B cell (primary cell): ENCODE measurements at regions of chr5 and their contacts with region 1.

Region 1: GRCh38 chr5:59799668-59800346 is 93.7 kb downstream of the PDE4D start:
- DNase-seq: peak; percentile 76
- ATAC-seq: peak; percentile 50
- H3K4me3 ChIP-seq: peak overlapping the region in 3 of 5 experiments; percentile 6 to 54 (median 28)
- H3K4me3 Mint-ChIP-seq: no peak overlapping the region
- H3K27ac ChIP-seq: peak overlapping the region; percentile 55 to 74
- H3K27ac Mint-ChIP-seq: no peak overlapping the region
- H3K4me1 ChIP-seq: peaks cover 26 to 30% of the 10 kb centered on the region in 2 donors
- H3K4me1 Mint-ChIP-seq: peaks cover 14% of the 10 kb centered on the region
- H3K27me3 ChIP-seq: no peaks in the 10 kb centered on the region
- H3K27me3 Mint-ChIP-seq: no peaks in the 10 kb centered on the region
- CTCF ChIP-seq: peak; percentile 94

Region 2: GRCh38 chr5:58886315-58887207 is 913.2 kb before region 1 on chr5:
- CTCF ChIA-PET with region 1: interaction called, 10 read pairs
- POLR2A ChIA-PET with region 1: no interaction called
- intact Hi-C with region 1: loop called (anchors 1 kb)
- DNase-seq: peak; percentile 70
- ATAC-seq: peak; percentile 89
- H3K4me3 ChIP-seq: no peak overlapping the region
- H3K4me3 Mint-ChIP-seq: no peak overlapping the region
- H3K27ac ChIP-seq: no peak overlapping the region
- H3K27ac Mint-ChIP-seq: no peak overlapping the region
- H3K4me1 ChIP-seq: peaks cover 0 to 3% of the 10 kb centered on the region in 2 donors
- H3K4me1 Mint-ChIP-seq: peaks cover 5% of the 10 kb centered on the region
- H3K27me3 ChIP-seq: peaks cover 0 to 7% (median 5%) of the 10 kb centered on the region in 4 experiments
- H3K27me3 Mint-ChIP-seq: peaks cover 14% of the 10 kb centered on the region
- CTCF ChIP-seq: peak; percentile 89

Region 3: GRCh38 chr5:59188419-59189225 is 611.2 kb before region 1 on chr5:
- CTCF ChIA-PET with region 1: interaction called, 20 read pairs
- POLR2A ChIA-PET with region 1: no interaction called
- intact Hi-C with region 1: loop called (anchors 1 kb)
- DNase-seq: peak; percentile 73
- ATAC-seq: peak; percentile 62
- H3K4me3 ChIP-seq: no peak overlapping the region
- H3K4me3 Mint-ChIP-seq: peak overlapping the region; percentile 5
- H3K27ac ChIP-seq: no peak overlapping the region
- H3K27ac Mint-ChIP-seq: no peak overlapping the region
- H3K4me1 ChIP-seq: peaks cover 4 to 6% of the 10 kb centered on the region in 2 donors
- H3K4me1 Mint-ChIP-seq: peaks cover 3% of the 10 kb centered on the region
- H3K27me3 ChIP-seq: no peaks in the 10 kb centered on the region
- H3K27me3 Mint-ChIP-seq: peaks cover 10% of the 10 kb centered on the region
- CTCF ChIP-seq: peak; percentile 93

Region 4: GRCh38 chr5:59506285-59506877 is 293.4 kb before region 1 on chr5:
- CTCF ChIA-PET with region 1: interaction called, 68 read pairs
- POLR2A ChIA-PET with region 1: no interaction called
- intact Hi-C with region 1: loop called (anchors 1 kb)
- DNase-seq: peak; percentile 57
- ATAC-seq: no peak
- H3K4me3 ChIP-seq: no peak overlapping the region
- H3K4me3 Mint-ChIP-seq: no peak overlapping the region
- H3K27ac ChIP-seq: no peak overlapping the region
- H3K27ac Mint-ChIP-seq: no peak overlapping the region
- H3K4me1 ChIP-seq: no peaks in the 10 kb centered on the region
- H3K4me1 Mint-ChIP-seq: no peaks in the 10 kb centered on the region
- H3K27me3 ChIP-seq: no peaks in the 10 kb centered on the region
- H3K27me3 Mint-ChIP-seq: no peaks in the 10 kb centered on the region
- CTCF ChIP-seq: peak; percentile 81

Region 5: GRCh38 chr5:59673438-59674058 is 126.3 kb before region 1 on chr5:
- CTCF ChIA-PET with region 1: interaction called, 31 read pairs
- POLR2A ChIA-PET with region 1: no interaction called
- intact Hi-C with region 1: loop called (anchors 1 kb)
- DNase-seq: peak; percentile 70
- ATAC-seq: no peak
- H3K4me3 ChIP-seq: no peak overlapping the region
- H3K4me3 Mint-ChIP-seq: no peak overlapping the region
- H3K27ac ChIP-seq: no peak overlapping the region
- H3K27ac Mint-ChIP-seq: no peak overlapping the region
- H3K4me1 ChIP-seq: peaks cover 0 to 4% of the 10 kb centered on the region in 2 donors
- H3K4me1 Mint-ChIP-seq: peaks cover 14% of the 10 kb centered on the region
- H3K27me3 ChIP-seq: no peaks in the 10 kb centered on the region
- H3K27me3 Mint-ChIP-seq: no peaks in the 10 kb centered on the region
- CTCF ChIP-seq: peak; percentile 95

Region 6: GRCh38 chr5:59810041-59810440 is 10.2 kb after region 1 on chr5:
- CTCF ChIA-PET with region 1: interaction called, 24 read pairs
- POLR2A ChIA-PET with region 1: no interaction called
- intact Hi-C with region 1: no loop called
- DNase-seq: peak; percentile 80
- ATAC-seq: peak; percentile 66
- H3K4me3 ChIP-seq: no peak overlapping the region
- H3K4me3 Mint-ChIP-seq: peak overlapping the region; percentile 51
- H3K27ac ChIP-seq: no peak overlapping the region
- H3K27ac Mint-ChIP-seq: no peak overlapping the region
- H3K4me1 ChIP-seq: peaks cover 0 to 4% of the 10 kb centered on the region in 2 donors
- H3K4me1 Mint-ChIP-seq: peaks cover 16% of the 10 kb centered on the region
- H3K27me3 ChIP-seq: no peaks in the 10 kb centered on the region
- H3K27me3 Mint-ChIP-seq: peaks cover 14% of the 10 kb centered on the region
- CTCF ChIP-seq: peak; percentile 97